Caco-2 (cell line): ENCODE measurements at regions of chr1 and their contacts with region 1.

Region 1: DNA sequence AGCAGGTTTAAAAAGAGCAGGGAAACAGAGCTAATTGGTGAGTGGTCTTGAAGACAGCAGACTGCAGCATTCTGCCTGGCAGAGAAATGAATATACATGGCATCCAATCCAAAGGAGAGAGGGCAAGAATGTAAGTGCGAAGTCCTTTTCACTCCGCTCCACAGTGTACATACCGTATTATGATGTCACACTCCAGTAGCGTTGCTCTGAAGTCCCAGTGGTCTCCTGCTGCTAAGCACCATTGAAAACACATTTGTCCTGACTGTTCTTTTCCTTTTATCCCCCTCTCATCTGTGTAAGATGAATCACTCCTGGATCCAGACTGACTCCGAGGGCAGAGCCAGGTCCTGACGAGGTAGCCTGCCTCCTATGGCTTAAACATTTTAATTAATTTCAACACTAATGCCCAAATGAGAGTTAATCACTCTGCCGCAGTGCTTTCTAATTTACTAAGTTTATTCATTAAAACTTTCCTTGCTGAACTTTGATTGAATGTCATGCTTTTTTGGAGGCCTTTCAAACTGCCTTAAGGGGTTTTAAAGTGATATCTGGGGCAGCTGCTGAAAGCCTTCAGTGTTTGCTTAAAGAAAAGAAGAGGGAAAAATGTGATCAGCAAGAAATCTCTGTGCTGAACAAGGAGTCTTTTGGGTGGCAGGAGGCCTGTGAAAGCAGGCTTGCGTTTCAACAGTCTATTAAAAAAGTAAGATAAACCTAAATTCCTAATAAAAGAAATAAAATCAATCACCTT is 227.2 kb downstream of the ATG4C start:
- DNase-seq: no peak
- H3K4me3 ChIP-seq: no peak overlapping the region
- H3K4me3 Mint-ChIP-seq: no peak overlapping the region
- H3K27ac Mint-ChIP-seq: no peak overlapping the region
- H3K4me1 ChIP-seq: no peaks in the 10 kb centered on the region
- H3K4me1 Mint-ChIP-seq: no peaks in the 10 kb centered on the region
- H3K27me3 ChIP-seq: no peaks in the 10 kb centered on the region
- H3K27me3 Mint-ChIP-seq: peaks cover 7% of the 10 kb centered on the region
- CTCF ChIP-seq: no peak

Region 2: DNA sequence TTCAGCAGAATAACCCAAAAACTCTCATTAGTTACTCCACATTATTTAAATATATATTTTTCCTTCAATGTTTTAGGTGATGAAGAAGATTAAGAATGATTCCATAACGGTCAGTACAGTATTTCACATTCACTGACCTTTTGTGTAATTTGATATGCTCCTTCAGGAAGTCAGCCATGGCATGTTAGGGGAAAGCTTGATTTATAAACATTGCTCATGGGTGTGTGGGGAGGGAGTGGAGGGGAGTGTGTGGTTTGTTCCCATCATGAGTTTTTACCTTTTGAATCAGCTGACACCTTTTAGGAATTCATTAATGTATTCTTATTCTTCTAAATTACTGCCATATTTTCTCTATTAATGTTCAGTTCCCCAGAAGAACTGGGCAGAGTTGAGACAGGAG is 13.0 kb after region 1 on chr1:
- CTCF ChIA-PET with region 1: no interaction called
- POLR2A ChIA-PET with region 1: no interaction called
- intact Hi-C with region 1: no loop called
- DNase-seq: no peak
- H3K4me3 ChIP-seq: no peak overlapping the region
- H3K4me3 Mint-ChIP-seq: no peak overlapping the region
- H3K27ac Mint-ChIP-seq: no peak overlapping the region
- H3K4me1 ChIP-seq: no peaks in the 10 kb centered on the region
- H3K4me1 Mint-ChIP-seq: no peaks in the 10 kb centered on the region
- H3K27me3 ChIP-seq: no peaks in the 10 kb centered on the region
- H3K27me3 Mint-ChIP-seq: peaks cover 13% of the 10 kb centered on the region
- CTCF ChIP-seq: no peak

Region 3: DNA sequence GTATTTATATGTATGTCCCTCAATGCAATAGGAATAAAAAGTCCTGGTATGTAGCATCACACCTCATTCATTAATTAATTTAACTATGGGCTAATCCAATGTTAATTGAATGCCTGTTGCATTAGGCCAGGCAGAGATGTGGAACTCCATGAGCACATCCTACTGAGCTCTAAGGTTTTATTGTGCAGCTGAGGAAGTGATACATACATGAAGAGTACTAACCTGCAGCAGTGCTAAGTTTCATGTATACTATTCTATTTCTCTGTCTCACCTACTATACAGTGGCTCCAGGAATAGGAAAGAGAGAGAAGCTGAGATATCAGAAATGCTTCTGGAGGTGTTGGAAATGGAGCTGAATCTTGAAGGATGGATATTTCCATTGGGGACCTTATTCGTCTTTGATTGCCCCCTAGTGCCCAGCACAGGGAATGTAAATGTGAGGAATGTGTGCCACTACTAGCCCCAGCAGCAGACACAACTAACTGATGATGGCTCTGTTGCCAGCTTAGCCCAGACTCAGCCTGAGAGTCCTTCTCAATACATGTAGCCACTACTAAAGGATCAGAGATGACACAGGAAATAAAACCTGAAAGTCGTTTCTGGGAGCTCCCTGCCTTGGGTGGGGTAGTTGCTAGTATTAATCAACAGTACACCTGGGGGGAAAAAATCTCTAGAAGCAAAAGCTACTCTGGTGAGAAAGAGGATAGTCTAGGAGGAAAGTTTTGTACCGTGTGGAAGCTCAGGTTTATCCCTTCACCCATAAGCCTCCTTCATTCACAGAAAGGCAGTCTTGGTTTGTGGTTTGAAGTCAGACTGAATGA is 137.9 kb after region 1 on chr1:
- CTCF ChIA-PET with region 1: no interaction called
- POLR2A ChIA-PET with region 1: no interaction called
- intact Hi-C with region 1: loop called (anchors 10 kb)
- DNase-seq: peak; percentile 29 to 37
- H3K4me3 ChIP-seq: no peak overlapping the region
- H3K4me3 Mint-ChIP-seq: no peak overlapping the region
- H3K27ac Mint-ChIP-seq: no peak overlapping the region
- H3K4me1 ChIP-seq: no peaks in the 10 kb centered on the region
- H3K4me1 Mint-ChIP-seq: no peaks in the 10 kb centered on the region
- H3K27me3 ChIP-seq: no peaks in the 10 kb centered on the region
- H3K27me3 Mint-ChIP-seq: peaks cover 6% of the 10 kb centered on the region
- CTCF ChIP-seq: peak; percentile 58 to 60